ENCODE measurements at regions of chr6 and their contacts with region 1.

Region 1: GRCh38 chr6:97177905-97178304 is 105.1 kb downstream of the MMS22L start:
- DNase-seq: no peak
- H3K4me3 ChIP-seq: no peak overlapping the region
- H3K27ac ChIP-seq: no peak overlapping the region
- H3K4me1 ChIP-seq: peaks cover 14% of the 10 kb centered on the region
- H3K27me3 ChIP-seq: no peaks in the 10 kb centered on the region
- CTCF ChIP-seq: no peak
- POLR2A ChIP-seq: no peak

Region 2: DNA sequence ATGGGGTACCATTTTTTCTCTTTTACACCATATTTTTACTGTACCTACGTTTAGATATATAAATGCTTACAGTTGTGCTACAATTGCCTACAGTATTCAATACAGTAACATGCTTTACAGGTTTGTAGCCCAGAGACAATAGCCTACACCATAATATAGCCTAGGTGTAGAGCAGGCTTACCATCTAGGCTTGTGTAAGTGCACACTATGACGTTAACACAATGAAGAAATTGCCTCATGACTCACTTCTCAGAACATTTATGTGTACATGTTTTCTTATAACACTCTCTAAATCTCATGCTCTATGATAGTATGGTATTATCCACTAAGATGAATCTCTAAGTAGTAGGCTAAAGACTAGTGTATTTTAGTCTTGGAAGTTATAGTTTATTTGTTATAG is 354.2 kb before region 1 on chr6:
- CTCF ChIA-PET with region 1: no interaction called
- POLR2A ChIA-PET with region 1: no interaction called
- dilution Hi-C with region 1: no loop called
- intact Hi-C with region 1: no loop called
- DNase-seq: no peak
- H3K4me3 ChIP-seq: no peak overlapping the region
- H3K27ac ChIP-seq: no peak overlapping the region
- H3K4me1 ChIP-seq: no peaks in the 10 kb centered on the region
- H3K27me3 ChIP-seq: no peaks in the 10 kb centered on the region
- CTCF ChIP-seq: no peak
- POLR2A ChIP-seq: no peak

Region 3: GRCh38 chr6:97133067-97133466 is 44.8 kb before region 1 on chr6:
- CTCF ChIA-PET with region 1: no interaction called
- POLR2A ChIA-PET with region 1: no interaction called
- dilution Hi-C with region 1: no loop called
- intact Hi-C with region 1: loop called (anchors 1 kb)
- DNase-seq: no peak
- H3K4me3 ChIP-seq: no peak overlapping the region
- H3K27ac ChIP-seq: no peak overlapping the region
- H3K4me1 ChIP-seq: no peaks in the 10 kb centered on the region
- H3K27me3 ChIP-seq: no peaks in the 10 kb centered on the region
- CTCF ChIP-seq: no peak
- POLR2A ChIP-seq: no peak